GM12878 (cell line): ENCODE measurements at regions of chr20 and their contacts with region 1.

Region 1: GRCh38 chr20:46089417-46090388 is at the start of gene NCOA5:
- DNase-seq: peak; percentile 84
- ATAC-seq: peak; percentile 91
- H3K4me3 ChIP-seq: peak within 1 kb of the TSS; percentile 80
- H3K27ac ChIP-seq: peak within 1 kb of the TSS; percentile 94
- H3K4me1 ChIP-seq: peaks cover 3% of the 10 kb centered on the region; the same call in 1 of the 2 replicates
- H3K27me3 ChIP-seq: no peaks in the 10 kb centered on the region
- CTCF ChIP-seq: peak; percentile 16 to 49 (median 19); a peak in 3 of 6 replicates
- EP300 ChIP-seq: no peak
- POLR2A ChIP-seq: peak; percentile 96
- RAD21 ChIP-seq: peak; percentile 25; the same call in 1 of the 2 replicates
- polyA plus RNA-seq, gene NCOA5: 7.7 to 8.8 TPM

Region 2: DNA sequence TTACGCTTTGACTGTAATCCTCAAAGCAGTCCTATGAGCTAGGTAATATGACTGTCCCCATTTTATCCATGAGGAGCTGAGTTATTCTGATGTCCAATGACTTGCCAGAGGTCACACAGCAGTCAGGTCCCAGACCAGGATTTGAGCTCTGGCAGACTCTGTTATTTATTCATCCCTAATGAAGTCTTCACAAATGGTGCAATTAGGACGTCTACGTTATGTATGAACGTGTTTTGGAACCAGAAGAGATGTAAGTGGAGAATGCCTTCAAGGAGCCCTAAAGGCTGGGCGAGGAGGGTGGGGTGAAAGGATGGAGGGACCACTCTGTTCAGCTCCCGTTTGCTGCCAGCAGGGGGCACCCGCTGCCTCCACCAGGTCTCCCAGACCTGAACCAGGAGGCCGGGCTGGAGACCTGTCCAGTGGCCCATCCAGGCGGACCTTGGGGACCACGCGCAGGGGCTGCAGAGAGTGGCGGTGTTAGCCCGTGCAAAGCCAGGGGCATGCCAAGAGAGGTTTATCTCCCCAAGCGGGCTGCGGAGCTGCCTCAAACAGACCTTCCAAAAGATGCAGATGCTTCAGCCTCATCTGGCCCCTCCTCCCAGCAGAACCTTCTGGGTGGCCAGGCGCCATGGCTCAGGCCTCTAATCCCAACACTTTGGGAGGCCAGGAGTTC is 102.5 kb before region 1 on chr20:
- CTCF ChIA-PET with region 1: interaction called, 10 read pairs
- POLR2A ChIA-PET with region 1: no interaction called
- RAD21 ChIA-PET with region 1: no interaction called
- SMC1A ChIA-PET with region 1: interaction called, 7 read pairs
- in situ Hi-C with region 1: no loop called
- intact Hi-C with region 1: no loop called
- DNase-seq: no peak
- ATAC-seq: peak; percentile 100
- H3K4me3 ChIP-seq: no peak overlapping the region
- H3K27ac ChIP-seq: no peak overlapping the region
- H3K4me1 ChIP-seq: peaks cover 6% of the 10 kb centered on the region
- H3K27me3 ChIP-seq: no peaks in the 10 kb centered on the region; a peak in 1 of 4 replicates
- CTCF ChIP-seq: peak; percentile 92 to 96 (median 93)
- EP300 ChIP-seq: no peak
- POLR2A ChIP-seq: no peak
- RAD21 ChIP-seq: peak; percentile 83

Region 3: DNA sequence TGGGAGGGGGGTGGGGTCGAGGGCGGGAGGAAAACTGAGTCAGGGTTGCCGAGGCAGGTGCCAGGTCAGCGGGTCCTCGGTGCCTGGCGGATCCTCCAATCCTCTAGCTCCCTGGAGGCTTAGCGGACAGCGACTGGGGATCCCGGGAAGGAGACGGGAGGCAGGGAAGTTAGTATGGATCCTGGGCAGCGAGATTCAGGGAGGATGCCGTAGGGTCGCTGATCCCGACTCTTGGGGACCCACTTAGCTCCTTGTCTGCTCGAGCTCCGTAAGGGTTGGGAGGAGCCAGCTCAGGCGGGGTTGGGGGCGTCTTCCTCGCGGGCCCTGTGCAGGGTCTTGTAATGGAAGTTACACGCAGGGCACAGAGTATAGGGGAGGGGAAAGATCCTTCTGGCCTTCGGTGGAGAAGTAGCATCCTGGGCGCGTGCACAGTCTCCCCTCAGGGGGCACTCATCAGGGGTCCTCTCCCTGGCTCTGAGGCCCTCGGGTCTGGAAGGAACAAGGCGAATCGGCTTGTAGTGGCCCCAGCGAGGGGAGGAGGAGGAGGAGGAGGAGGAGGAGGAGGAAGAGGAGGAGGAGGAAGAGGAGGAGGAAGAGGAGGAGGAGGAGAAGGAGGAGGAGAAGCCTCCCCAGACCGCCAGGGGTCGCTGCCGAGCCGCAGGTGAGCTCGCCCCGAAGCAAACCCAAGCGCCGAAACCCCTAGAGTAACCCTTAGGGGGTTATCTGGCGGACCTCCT is 67.1 kb before region 1 on chr20:
- CTCF ChIA-PET with region 1: interaction called, 16 read pairs
- POLR2A ChIA-PET with region 1: no interaction called
- RAD21 ChIA-PET with region 1: interaction called, 6 read pairs
- SMC1A ChIA-PET with region 1: interaction called, 9 read pairs
- in situ Hi-C with region 1: no loop called
- intact Hi-C with region 1: loop called (anchors 1 kb)
- DNase-seq: no peak
- ATAC-seq: peak; percentile 84
- H3K4me3 ChIP-seq: peak overlapping the region; percentile 38; the same call in 1 of the 2 replicates
- H3K27ac ChIP-seq: no peak overlapping the region
- H3K4me1 ChIP-seq: no peaks in the 10 kb centered on the region
- H3K27me3 ChIP-seq: peaks cover 2 to 4% of the 10 kb centered on the region in 2 experiments; a peak in 2 of 4 replicates
- CTCF ChIP-seq: peak; percentile 69 to 88 (median 71)
- EP300 ChIP-seq: no peak
- POLR2A ChIP-seq: no peak
- RAD21 ChIP-seq: peak; percentile 75

Region 4: DNA sequence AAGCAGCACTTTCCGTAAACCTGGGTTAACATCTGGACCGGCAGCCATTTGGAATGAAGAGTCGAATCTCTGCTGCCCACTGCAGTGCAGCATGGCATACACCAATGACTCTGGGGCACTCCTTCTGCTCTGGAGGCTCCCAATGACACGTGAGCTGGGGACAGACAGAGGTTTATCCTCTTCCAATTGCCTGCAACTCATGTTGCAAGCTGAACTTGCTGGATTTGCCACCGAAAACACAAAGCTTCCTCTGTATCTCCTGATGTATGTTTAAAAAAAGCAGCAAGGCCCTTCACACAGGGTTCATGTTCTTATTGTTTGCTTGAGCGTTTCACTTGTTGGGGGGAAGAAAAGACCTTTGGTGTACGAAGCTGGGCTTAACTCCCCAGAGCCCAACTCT is 10.7 kb before region 1 on chr20:
- CTCF ChIA-PET with region 1: interaction called, 5 read pairs
- POLR2A ChIA-PET with region 1: interaction called, 6 read pairs
- RAD21 ChIA-PET with region 1: no interaction called
- SMC1A ChIA-PET with region 1: interaction called, 14 read pairs
- in situ Hi-C with region 1: no loop called
- intact Hi-C with region 1: no loop called
- DNase-seq: no peak
- ATAC-seq: no peak
- H3K4me3 ChIP-seq: no peak overlapping the region
- H3K27ac ChIP-seq: no peak overlapping the region
- H3K4me1 ChIP-seq: no peaks in the 10 kb centered on the region
- H3K27me3 ChIP-seq: no peaks in the 10 kb centered on the region
- CTCF ChIP-seq: no peak
- EP300 ChIP-seq: no peak
- POLR2A ChIP-seq: no peak; the same call in 1 of the 2 replicates
- RAD21 ChIP-seq: no peak

Region 5: DNA sequence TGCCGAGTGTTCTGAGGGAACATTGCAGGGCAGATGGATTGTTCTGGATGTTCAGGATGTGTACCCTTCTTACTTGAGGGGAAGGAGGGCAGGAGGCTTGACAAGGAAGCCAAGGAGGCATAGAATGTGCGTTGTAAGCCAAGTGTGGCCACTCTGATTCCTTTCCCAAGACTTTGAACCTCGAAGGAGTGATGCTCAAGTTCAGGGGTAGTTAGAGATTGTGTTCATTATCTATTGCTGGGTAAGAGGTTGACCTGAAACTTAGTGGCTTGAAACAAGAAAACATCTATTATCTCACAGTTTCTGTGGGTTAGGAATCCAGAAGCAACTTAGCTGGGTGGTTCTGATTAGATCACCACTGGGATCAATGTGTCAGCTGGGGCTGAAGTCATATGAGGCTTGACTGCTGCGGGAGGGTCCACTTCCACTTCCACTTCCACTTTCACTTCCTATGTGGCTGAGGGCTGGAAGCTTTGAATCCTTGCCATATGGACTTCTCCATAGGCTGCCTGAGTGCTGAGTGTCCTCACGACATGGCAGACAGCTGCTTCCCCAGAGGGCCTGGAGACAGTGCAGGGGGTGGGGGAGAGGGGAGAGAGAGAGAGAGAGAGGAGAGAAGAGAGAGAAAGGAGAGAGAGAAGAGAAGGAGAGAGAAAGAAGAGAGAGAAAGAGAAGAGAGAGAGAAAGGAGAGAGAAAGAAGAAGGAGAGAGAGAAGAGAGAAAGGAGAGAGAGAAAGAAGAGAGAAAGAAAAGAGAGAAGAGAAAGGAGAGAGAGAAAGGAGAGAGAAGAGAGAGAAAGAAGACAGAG is 21.5 kb after region 1 on chr20:
- CTCF ChIA-PET with region 1: interaction called, 10 read pairs
- POLR2A ChIA-PET with region 1: interaction called, 8 read pairs
- RAD21 ChIA-PET with region 1: interaction called, 4 read pairs
- SMC1A ChIA-PET with region 1: interaction called, 11 read pairs
- in situ Hi-C with region 1: no loop called
- intact Hi-C with region 1: no loop called
- DNase-seq: peak; percentile 75
- ATAC-seq: peak; percentile 77
- H3K4me3 ChIP-seq: peak overlapping the region; percentile 7; the same call in 1 of the 2 replicates
- H3K27ac ChIP-seq: no peak overlapping the region
- H3K4me1 ChIP-seq: peaks cover 37% of the 10 kb centered on the region
- H3K27me3 ChIP-seq: no peaks in the 10 kb centered on the region
- CTCF ChIP-seq: no peak
- EP300 ChIP-seq: peak; percentile 33 to 51; a peak in 2 of 4 replicates
- POLR2A ChIP-seq: no peak
- RAD21 ChIP-seq: no peak

Region 6: GRCh38 chr20:46117704-46118467 is 28.2 kb after region 1 on chr20 and contains the start of gene CD40:
- CTCF ChIA-PET with region 1: interaction called, 18 read pairs
- POLR2A ChIA-PET with region 1: interaction called, 5 read pairs
- RAD21 ChIA-PET with region 1: interaction called, 9 read pairs
- SMC1A ChIA-PET with region 1: interaction called, 17 read pairs
- in situ Hi-C with region 1: no loop called
- intact Hi-C with region 1: no loop called
- DNase-seq: peak; percentile 76
- ATAC-seq: peak; percentile 90
- H3K4me3 ChIP-seq: peak within 1 kb of the TSS; percentile 96
- H3K27ac ChIP-seq: peak within 1 kb of the TSS; percentile 76
- H3K4me1 ChIP-seq: peaks cover 6% of the 10 kb centered on the region
- H3K27me3 ChIP-seq: no peaks in the 10 kb centered on the region
- CTCF ChIP-seq: no peak
- EP300 ChIP-seq: 0 out of 4 replicates have a peak, but pooled peaks of 1 of the 2 experiments have one; percentile 26
- POLR2A ChIP-seq: peak; percentile 97
- RAD21 ChIP-seq: no peak
- polyA plus RNA-seq, gene CD40: 40.8 to 71.7 TPM

Region 7: DNA sequence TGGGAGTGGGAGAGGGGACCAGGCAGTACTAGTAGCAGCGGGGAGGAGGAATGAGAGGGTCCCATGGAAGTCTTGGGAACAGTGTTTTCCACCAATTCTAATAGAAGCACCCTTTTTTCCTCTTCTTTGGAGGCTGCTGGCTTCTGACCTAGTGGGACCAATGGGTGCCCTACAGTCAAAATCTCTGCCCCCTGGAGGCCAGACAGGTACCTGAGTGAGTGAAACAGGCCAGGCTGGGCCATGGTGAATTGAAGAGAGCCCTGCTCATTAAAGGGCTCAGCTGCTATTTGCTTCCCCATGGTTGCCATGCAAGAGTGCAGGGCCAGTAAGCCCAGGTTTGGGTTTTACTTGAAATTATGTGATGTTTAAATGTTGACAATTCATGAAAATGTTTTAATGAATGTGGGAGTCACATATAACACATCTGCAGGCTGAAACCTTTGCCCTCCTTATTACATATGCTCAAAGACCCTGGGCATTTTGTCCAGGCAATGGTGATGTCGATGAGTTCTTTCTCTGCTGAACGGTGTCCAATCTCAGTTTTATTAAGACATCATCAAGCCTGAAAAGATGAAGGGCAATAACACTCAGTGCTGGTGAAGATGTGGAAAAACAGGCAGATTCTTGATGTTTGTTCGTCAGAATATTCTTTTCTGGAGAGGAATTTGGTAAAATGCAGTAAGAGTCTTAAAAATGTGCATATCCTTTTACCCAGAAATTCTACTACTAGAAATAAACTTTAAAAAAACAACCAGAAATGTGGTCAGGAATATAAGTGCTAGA is 503.1 kb after region 1 on chr20:
- CTCF ChIA-PET with region 1: no interaction called
- POLR2A ChIA-PET with region 1: no interaction called
- RAD21 ChIA-PET with region 1: no interaction called
- SMC1A ChIA-PET with region 1: no interaction called
- in situ Hi-C with region 1: no loop called
- intact Hi-C with region 1: no loop called
- DNase-seq: no peak
- ATAC-seq: peak; percentile 69
- H3K4me3 ChIP-seq: no peak overlapping the region
- H3K27ac ChIP-seq: no peak overlapping the region
- H3K4me1 ChIP-seq: peaks cover 12% of the 10 kb centered on the region
- H3K27me3 ChIP-seq: peaks cover 0 to 2% of the 10 kb centered on the region in 2 experiments; a peak in 1 of 4 replicates
- CTCF ChIP-seq: peak in 2 of 3 experiments; percentile 2 to 35; a peak in 2 of 6 replicates
- EP300 ChIP-seq: no peak
- POLR2A ChIP-seq: no peak
- RAD21 ChIP-seq: no peak